Gastrocnemius medialis (tissue), 4 donors: ENCODE measurements at regions of chr12 and their contacts with region 1.

Region 1: DNA sequence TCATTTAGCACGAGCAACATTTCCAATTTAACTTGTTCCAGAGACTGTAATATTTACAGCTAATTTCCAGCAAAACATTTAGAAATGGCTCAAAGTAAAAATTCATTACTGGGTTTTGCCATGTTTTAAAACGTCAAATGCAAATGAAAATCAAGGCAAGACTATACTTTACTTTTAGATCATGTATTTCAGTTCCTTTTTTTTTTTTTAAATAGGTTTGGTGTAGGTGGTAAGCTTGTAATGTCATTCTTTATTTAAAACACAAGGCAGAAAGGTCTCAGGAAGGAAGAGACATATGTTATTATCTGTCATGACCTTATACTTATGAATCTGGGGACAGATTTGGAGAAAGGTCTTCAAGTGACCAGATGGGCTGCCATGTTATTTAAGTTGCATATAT is 54.1 kb downstream of the GRIP1 start:
- DNase-seq: no peak
- ATAC-seq: no peak
- H3K4me3 ChIP-seq: no peak overlapping the region
- H3K27ac ChIP-seq: no peak overlapping the region
- H3K4me1 ChIP-seq: no peaks in the 10 kb centered on the region
- H3K27me3 ChIP-seq: no peaks in the 10 kb centered on the region
- CTCF ChIP-seq: no peak
- POLR2A ChIP-seq: no peak

Region 2: DNA sequence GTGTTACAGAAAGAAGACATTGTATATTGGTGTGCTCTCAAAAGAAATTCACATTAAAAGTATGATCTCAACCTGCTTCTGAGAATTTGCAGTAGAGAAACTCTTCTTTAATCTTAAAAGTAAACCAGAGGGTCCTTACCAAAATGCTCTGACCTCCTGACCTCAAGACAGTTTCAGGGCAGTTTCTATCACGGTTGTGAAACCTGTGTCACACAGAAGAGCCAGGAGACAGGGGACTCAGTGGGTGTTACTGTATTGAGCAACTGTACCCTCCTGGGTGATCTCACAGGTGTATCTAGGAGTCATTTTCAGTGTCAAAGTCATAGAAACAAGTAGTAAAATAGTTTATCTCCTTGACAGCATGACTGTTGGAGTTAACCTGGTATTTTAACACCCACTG is 124.0 kb before region 1 on chr12:
- in situ Hi-C with region 1: loop called in 1 of 4 experiments (anchors 25 kb)
- intact Hi-C with region 1: no loop called
- DNase-seq: no peak
- ATAC-seq: no peak
- H3K4me3 ChIP-seq: no peak overlapping the region
- H3K27ac ChIP-seq: no peak overlapping the region
- H3K4me1 ChIP-seq: no peaks in the 10 kb centered on the region
- H3K27me3 ChIP-seq: no peaks in the 10 kb centered on the region
- CTCF ChIP-seq: no peak
- POLR2A ChIP-seq: no peak